PC-9 (cell line): ENCODE measurements at regions of chr6 and their contacts with region 1.

Region 1: DNA sequence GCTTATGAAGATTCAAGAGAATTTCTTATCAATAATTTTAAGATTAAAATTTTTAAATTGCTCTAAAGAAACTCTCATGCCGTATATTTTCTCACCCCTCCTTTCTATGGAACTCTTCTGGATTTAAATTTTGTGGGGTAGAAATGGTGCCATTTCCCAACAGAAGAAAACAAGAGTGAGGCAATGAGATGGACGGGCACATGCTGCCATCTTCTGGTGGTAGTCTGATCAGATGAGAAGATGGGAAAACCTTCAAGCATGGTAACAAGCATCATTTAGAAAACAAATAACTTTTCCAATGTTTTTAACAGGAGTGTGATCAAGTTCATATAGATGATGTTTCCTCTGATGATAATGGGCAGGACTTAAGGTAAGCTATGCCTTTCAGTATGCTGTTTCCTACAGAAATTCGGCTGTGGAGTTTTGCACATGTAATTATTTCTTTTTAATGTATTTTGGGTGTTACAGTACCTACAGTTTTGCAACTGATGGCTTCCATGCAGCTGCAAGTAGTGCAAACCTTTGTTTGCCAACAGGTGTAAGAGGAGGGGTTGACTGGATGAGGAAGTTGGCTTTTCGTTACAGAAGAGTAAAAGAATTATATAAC is 271.4 kb downstream of the EYA4 start:
- DNase-seq: peak in 1 of 2 experiments; percentile 45
- H3K4me3 ChIP-seq: no peak overlapping the region
- H3K27ac ChIP-seq: no peak overlapping the region
- H3K4me1 ChIP-seq: no peaks in the 10 kb centered on the region
- H3K27me3 ChIP-seq: no peaks in the 10 kb centered on the region
- CTCF ChIP-seq: peak; percentile 93

Region 2: DNA sequence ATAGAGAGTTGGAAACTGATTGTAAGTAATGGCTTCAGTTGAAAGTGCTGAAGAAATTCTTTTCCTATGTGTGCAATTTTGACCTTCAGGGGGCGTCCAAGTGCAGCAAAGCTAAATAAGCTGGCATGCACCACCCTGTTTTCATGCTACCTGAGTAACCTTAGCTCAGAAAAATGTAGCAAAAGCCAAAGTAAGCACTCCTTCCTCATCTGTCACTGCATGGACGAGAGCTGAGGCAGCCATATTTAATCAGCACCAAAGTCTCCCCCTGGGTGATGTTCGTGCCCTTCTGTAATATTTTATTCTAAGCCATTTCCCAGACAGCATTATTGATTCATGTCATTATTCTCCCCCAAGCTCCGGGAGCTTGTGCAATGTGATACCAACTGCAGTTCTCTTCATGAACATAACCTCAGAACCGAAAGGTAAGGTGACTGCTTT is 575.0 kb before region 1 on chr6:
- CTCF ChIA-PET with region 1: no interaction called
- POLR2A ChIA-PET with region 1: no interaction called
- intact Hi-C with region 1: loop called (anchors 1 kb)
- DNase-seq: peak in 1 of 2 experiments; percentile 56
- H3K4me3 ChIP-seq: no peak overlapping the region
- H3K27ac ChIP-seq: no peak overlapping the region
- H3K4me1 ChIP-seq: no peaks in the 10 kb centered on the region
- H3K27me3 ChIP-seq: no peaks in the 10 kb centered on the region
- CTCF ChIP-seq: peak; percentile 74

Region 3: DNA sequence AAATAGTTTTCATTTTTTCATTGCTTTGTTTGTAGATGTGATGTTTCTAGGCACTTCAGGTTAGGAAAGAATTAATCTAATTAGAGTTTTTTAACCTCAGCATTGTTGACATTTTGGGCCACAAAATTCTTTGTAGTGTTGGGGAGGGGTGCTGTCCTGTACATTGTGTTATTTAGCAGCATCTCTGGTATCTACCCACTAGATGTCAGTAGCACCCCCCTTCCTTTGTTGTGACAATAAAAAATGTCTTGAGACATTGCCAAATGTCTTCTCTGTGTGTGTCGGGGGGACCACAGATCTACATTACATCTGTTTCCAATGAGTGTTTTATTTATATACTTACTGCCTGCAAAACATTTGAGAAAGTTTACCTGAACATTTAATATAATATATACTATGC is 225.7 kb before region 1 on chr6:
- CTCF ChIA-PET with region 1: no interaction called
- POLR2A ChIA-PET with region 1: no interaction called
- intact Hi-C with region 1: loop called (anchors 1 kb)
- DNase-seq: no peak
- H3K4me3 ChIP-seq: no peak overlapping the region
- H3K27ac ChIP-seq: no peak overlapping the region
- H3K4me1 ChIP-seq: no peaks in the 10 kb centered on the region
- H3K27me3 ChIP-seq: no peaks in the 10 kb centered on the region
- CTCF ChIP-seq: peak; percentile 62

Region 4: DNA sequence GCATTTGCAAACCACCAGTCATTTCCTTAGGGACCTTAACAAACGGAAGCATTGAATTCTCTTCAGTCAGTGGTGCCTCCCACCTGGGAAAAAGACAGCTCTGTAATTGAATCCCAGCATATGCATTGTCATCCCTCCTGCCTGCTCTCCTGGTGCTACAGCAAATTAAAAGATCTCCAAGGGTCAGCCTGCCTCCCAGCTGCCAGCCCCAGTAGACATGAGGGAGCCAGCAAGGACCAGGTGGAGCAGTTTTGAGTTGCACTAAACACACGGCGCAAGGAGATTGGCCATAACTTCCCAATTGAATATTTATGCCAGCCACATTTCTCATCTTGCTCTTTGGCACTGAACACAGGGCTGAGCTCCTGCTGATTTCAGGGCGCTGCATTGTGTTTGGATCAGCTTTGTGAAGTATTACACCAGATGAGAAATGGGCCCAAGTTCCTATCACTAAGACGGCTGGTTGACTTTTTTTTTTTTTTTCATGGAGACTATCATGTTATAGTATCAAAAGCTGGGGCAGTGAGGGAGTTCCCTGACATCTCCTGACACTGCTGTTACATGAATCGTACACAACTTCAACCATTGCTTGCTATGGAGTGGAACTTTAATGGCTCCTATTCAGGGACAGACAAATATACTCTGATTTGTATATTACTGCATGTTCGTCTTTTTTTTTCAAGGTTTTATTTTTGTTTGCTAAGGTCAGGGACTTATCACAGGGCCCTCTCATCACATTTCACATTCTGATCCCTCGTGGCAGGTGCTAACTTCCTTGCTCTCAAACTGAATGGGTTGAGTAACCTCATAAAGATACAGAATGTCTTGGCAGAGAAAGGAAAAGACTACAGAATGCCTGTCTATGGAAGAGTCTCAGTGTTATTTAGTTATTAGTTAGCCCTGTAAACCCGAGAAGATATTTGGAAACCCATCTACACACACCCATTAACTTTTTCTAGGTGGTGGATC is 80.2 kb before region 1 on chr6:
- CTCF ChIA-PET with region 1: no interaction called
- POLR2A ChIA-PET with region 1: no interaction called
- intact Hi-C with region 1: loop called (anchors 1 kb)
- DNase-seq: no peak
- H3K4me3 ChIP-seq: no peak overlapping the region
- H3K27ac ChIP-seq: no peak overlapping the region
- H3K4me1 ChIP-seq: no peaks in the 10 kb centered on the region
- H3K27me3 ChIP-seq: no peaks in the 10 kb centered on the region
- CTCF ChIP-seq: no peak

Region 5: GRCh38 chr6:133466666-133467065 is 45.8 kb before region 1 on chr6:
- CTCF ChIA-PET with region 1: no interaction called
- POLR2A ChIA-PET with region 1: no interaction called
- intact Hi-C with region 1: no loop called
- DNase-seq: no peak
- H3K4me3 ChIP-seq: no peak overlapping the region
- H3K27ac ChIP-seq: no peak overlapping the region
- H3K4me1 ChIP-seq: no peaks in the 10 kb centered on the region; the same call in 1 of the 2 replicates
- H3K27me3 ChIP-seq: no peaks in the 10 kb centered on the region
- CTCF ChIP-seq: no peak

Region 6: GRCh38 chr6:133916650-133917151 is 404.2 kb after region 1 on chr6:
- CTCF ChIA-PET with region 1: no interaction called
- POLR2A ChIA-PET with region 1: no interaction called
- intact Hi-C with region 1: loop called (anchors 5 kb)
- DNase-seq: peak; percentile 71 to 82
- H3K4me3 ChIP-seq: peak overlapping the region; percentile 6; the same call in 1 of the 2 replicates
- H3K27ac ChIP-seq: no peak overlapping the region
- H3K4me1 ChIP-seq: no peaks in the 10 kb centered on the region
- H3K27me3 ChIP-seq: no peaks in the 10 kb centered on the region
- CTCF ChIP-seq: peak; percentile 100